A673 (cell line): ENCODE measurements at regions of chr7 and their contacts with region 1.

Region 1: GRCh38 chr7:4744391-4745264 is 30.8 kb upstream of the AP5Z1 start:
- DNase-seq: peak; percentile 98
- H3K4me3 ChIP-seq: peak overlapping the region; percentile 8
- H3K27ac ChIP-seq: peak overlapping the region; percentile 89
- H3K4me1 ChIP-seq: peaks cover 26% of the 10 kb centered on the region
- H3K27me3 ChIP-seq: no peaks in the 10 kb centered on the region
- CTCF ChIP-seq: no peak

Region 2: GRCh38 chr7:4561795-4562194 is 182.8 kb before region 1 on chr7:
- CTCF ChIA-PET with region 1: no interaction called
- POLR2A ChIA-PET with region 1: interaction called, 11 read pairs
- intact Hi-C with region 1: no loop called
- DNase-seq: no peak
- H3K4me3 ChIP-seq: no peak overlapping the region
- H3K27ac ChIP-seq: no peak overlapping the region
- H3K4me1 ChIP-seq: no peaks in the 10 kb centered on the region
- H3K27me3 ChIP-seq: peaks cover 19% of the 10 kb centered on the region
- CTCF ChIP-seq: 0 out of 2 replicates have a peak, but pooled peaks have one; percentile 15

Region 3: DNA sequence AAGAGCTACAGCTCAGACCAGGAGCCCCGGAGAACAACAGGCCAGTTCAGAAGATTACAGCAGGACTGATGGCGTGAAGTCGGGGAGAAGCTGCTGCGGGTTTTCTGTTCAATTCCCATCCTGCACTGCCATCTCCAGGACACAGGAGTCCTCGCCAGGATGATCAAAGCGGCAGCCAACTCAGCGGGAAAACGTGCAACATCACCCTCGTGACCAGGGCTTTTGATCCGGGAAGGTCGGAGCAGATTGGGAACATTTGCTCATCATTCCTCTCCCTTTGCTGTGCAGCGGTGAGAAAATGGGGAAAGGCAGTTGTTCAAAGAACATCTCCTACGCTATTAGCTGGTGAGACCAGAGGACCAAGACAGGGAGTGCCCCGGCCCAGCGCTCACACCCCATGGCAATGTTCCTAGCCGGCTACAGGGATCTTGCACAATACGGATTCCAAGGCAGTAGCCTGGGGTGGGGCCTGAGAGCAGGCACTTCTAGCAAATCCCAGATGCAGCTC is 112.9 kb before region 1 on chr7:
- CTCF ChIA-PET with region 1: no interaction called
- POLR2A ChIA-PET with region 1: no interaction called
- intact Hi-C with region 1: loop called (anchors 5 kb)
- DNase-seq: peak; percentile 84
- H3K4me3 ChIP-seq: no peak overlapping the region
- H3K27ac ChIP-seq: no peak overlapping the region
- H3K4me1 ChIP-seq: no peaks in the 10 kb centered on the region
- H3K27me3 ChIP-seq: no peaks in the 10 kb centered on the region
- CTCF ChIP-seq: peak; percentile 71

Region 4: GRCh38 chr7:4689668-4690067 is 55.0 kb before region 1 on chr7:
- CTCF ChIA-PET with region 1: no interaction called
- POLR2A ChIA-PET with region 1: no interaction called
- intact Hi-C with region 1: loop called (anchors 5 kb)
- DNase-seq: no peak
- H3K4me3 ChIP-seq: peak overlapping the region; percentile 16
- H3K27ac ChIP-seq: no peak overlapping the region
- H3K4me1 ChIP-seq: peaks cover 58% of the 10 kb centered on the region
- H3K27me3 ChIP-seq: no peaks in the 10 kb centered on the region
- CTCF ChIP-seq: no peak

Region 5: GRCh38 chr7:4706384-4707216 is 38.0 kb before region 1 on chr7:
- CTCF ChIA-PET with region 1: no interaction called
- POLR2A ChIA-PET with region 1: no interaction called
- intact Hi-C with region 1: loop called (anchors 2 kb)
- DNase-seq: peak; percentile 70
- H3K4me3 ChIP-seq: peak overlapping the region; percentile 40
- H3K27ac ChIP-seq: peak overlapping the region; percentile 92
- H3K4me1 ChIP-seq: peaks cover 49% of the 10 kb centered on the region
- H3K27me3 ChIP-seq: no peaks in the 10 kb centered on the region
- CTCF ChIP-seq: no peak